Psoas muscle (tissue), 8 donors: ENCODE measurements at regions of chr20 and their contacts with region 1.

Region 1: GRCh38 chr20:41476013-41476752 is 109.6 kb upstream of the EMILIN3 start:
- DNase-seq: no peak
- ATAC-seq: peak; percentile 93 to 97 (median 95)
- H3K4me3 ChIP-seq: no peak overlapping the region
- H3K27ac ChIP-seq: peak overlapping the region; percentile 81
- H3K4me1 ChIP-seq: peaks cover 22% of the 10 kb centered on the region
- H3K27me3 ChIP-seq: no peaks in the 10 kb centered on the region
- CTCF ChIP-seq: no peak

Region 2: GRCh38 chr20:41693136-41693979 is 217.2 kb after region 1 on chr20:
- intact Hi-C with region 1: loop called in 1 of 2 experiments (anchors 10 kb)
- DNase-seq: peak; percentile 76 to 89
- ATAC-seq: peak; percentile 92 to 95 (median 94)
- H3K4me3 ChIP-seq: peak overlapping the region; percentile 75
- H3K27ac ChIP-seq: peak overlapping the region; percentile 86
- H3K4me1 ChIP-seq: peaks cover 4% of the 10 kb centered on the region
- H3K27me3 ChIP-seq: no peaks in the 10 kb centered on the region
- CTCF ChIP-seq: peak; percentile 61